ENCODE measurements at regions of chr10 and their contacts with region 1.

Region 1: DNA sequence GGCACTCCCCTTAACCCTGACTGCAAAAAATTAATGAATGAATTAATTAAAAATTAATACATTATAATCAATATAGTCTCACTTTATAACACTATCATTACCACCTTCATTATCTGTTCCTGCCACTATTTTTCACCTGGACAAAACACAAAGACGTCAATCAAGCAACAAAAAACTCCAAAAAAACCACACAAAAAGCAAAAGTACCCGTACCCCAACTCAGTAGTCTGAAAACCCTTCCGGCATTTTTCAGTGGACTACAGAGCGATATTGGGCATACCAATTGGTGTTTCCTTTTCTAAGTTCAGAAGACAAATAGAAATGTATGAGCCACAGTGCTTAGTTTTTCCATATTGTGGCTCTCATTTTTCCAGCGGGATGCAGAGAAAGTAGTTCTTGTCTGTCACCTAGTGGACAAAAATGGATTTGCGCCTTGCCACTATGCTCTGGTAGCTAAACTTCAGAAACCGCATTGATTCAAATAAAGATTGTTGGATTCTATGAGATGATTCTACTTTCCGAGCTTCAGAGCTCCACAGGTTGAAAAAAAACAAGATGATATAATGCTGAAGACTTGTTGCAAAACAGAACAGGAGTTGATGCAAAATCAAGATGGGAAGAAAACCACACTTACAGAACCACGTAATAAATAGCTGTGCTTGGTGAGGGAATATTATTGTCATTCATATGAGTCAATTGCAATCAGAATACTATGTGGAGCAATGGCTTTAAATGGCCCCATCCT is 50.6 kb upstream of the ITGB1 start:
- DNase-seq: peak; percentile 71
- ATAC-seq: no peak; the same call in 1 of the 2 replicates
- H3K4me3 ChIP-seq: no peak overlapping the region; a peak in 1 of 4 replicates
- H3K27ac ChIP-seq: no peak overlapping the region
- H3K4me1 ChIP-seq: peaks cover 44 to 63% of the 10 kb centered on the region in 2 experiments
- H3K27me3 ChIP-seq: no peaks in the 10 kb centered on the region
- CTCF ChIP-seq: peak; percentile 95 to 99 (median 96)
- POLR2A ChIP-seq: no peak
- RAD21 ChIP-seq: peak; percentile 99

Region 2: DNA sequence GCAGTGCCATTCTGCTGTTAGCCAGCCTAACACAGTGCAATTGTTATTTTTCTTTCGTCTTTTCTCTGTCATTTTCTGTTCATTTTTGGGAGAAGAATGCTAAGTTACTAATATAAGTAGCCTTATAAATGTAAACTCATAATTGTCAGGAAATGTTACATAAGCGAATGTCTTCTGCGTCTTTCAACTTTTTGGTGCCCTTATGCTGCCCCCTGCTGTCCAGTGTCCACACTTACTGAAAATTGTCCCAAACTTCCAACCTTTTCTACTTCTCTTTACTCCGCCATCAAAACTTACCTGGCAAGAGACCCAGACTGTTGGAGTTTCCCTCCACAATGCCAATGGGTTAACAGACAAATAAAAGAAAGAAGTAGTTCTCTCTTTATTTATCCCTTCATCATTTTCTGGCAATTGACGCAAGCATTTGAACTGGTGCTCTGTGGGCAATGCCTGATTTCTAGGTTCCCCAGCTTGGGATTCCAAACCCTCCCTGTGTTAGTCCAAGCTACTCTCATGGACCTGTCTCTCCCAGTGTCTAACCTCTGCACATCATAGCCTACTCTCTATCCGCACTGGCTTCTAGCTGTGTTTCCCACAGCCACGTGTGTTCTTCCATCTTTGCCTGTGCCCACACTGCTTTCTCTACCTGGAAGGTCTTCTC is 640.7 kb before region 1 on chr10:
- CTCF ChIA-PET with region 1: no interaction called
- POLR2A ChIA-PET with region 1: no interaction called
- RAD21 ChIA-PET with region 1: no interaction called
- intact Hi-C with region 1: loop called (anchors 5 kb)
- DNase-seq: peak; percentile 48
- ATAC-seq: peak; percentile 66
- H3K4me3 ChIP-seq: no peak overlapping the region
- H3K27ac ChIP-seq: no peak overlapping the region
- H3K4me1 ChIP-seq: no peaks in the 10 kb centered on the region
- H3K27me3 ChIP-seq: no peaks in the 10 kb centered on the region
- CTCF ChIP-seq: peak; percentile 48 to 81 (median 69); a peak in 5 of 6 replicates
- POLR2A ChIP-seq: no peak
- RAD21 ChIP-seq: peak; percentile 70

Region 3: GRCh38 chr10:32548208-32548607 is 460.5 kb before region 1 on chr10:
- CTCF ChIA-PET with region 1: no interaction called
- POLR2A ChIA-PET with region 1: no interaction called
- RAD21 ChIA-PET with region 1: no interaction called
- intact Hi-C with region 1: no loop called
- DNase-seq: no peak
- ATAC-seq: no peak
- H3K4me3 ChIP-seq: no peak overlapping the region
- H3K27ac ChIP-seq: no peak overlapping the region
- H3K4me1 ChIP-seq: no peaks in the 10 kb centered on the region
- H3K27me3 ChIP-seq: no peaks in the 10 kb centered on the region
- CTCF ChIP-seq: no peak
- POLR2A ChIP-seq: no peak
- RAD21 ChIP-seq: no peak

Region 4: GRCh38 chr10:32713560-32713959 is 295.1 kb before region 1 on chr10:
- CTCF ChIA-PET with region 1: no interaction called
- POLR2A ChIA-PET with region 1: no interaction called
- RAD21 ChIA-PET with region 1: no interaction called
- intact Hi-C with region 1: loop called (anchors 5 kb)
- DNase-seq: no peak
- ATAC-seq: peak; percentile 69
- H3K4me3 ChIP-seq: no peak overlapping the region
- H3K27ac ChIP-seq: no peak overlapping the region
- H3K4me1 ChIP-seq: no peaks in the 10 kb centered on the region
- H3K27me3 ChIP-seq: no peaks in the 10 kb centered on the region
- CTCF ChIP-seq: peak; percentile 25 to 50 (median 44); a peak in 5 of 6 replicates
- POLR2A ChIP-seq: no peak
- RAD21 ChIP-seq: peak; percentile 52

Region 5: DNA sequence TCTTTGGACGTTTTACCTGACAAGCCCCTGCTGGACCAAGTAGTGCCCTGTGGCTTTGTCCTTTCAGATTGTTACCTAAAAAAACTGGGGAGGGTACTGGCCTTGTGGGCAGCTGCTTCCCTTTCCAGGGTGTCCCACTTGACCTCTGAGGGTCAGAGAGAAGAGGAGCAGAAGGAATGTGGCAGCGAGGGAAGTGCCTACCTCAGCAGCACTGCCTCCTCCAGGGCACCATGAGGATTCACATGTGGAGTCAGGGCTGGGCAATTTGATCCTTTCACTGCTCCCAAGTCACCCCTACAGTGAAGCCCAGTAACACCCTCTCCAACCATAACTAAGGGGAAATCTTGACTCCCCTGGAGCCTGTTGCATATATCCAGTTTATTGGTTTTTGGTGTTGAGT is 115.2 kb before region 1 on chr10:
- CTCF ChIA-PET with region 1: no interaction called
- POLR2A ChIA-PET with region 1: no interaction called
- RAD21 ChIA-PET with region 1: no interaction called
- intact Hi-C with region 1: loop called (anchors 5 kb)
- DNase-seq: no peak
- ATAC-seq: peak; percentile 89
- H3K4me3 ChIP-seq: no peak overlapping the region
- H3K27ac ChIP-seq: no peak overlapping the region
- H3K4me1 ChIP-seq: no peaks in the 10 kb centered on the region
- H3K27me3 ChIP-seq: no peaks in the 10 kb centered on the region
- CTCF ChIP-seq: peak in 2 of 3 experiments; percentile 34 to 55; a peak in 4 of 6 replicates
- POLR2A ChIP-seq: no peak
- RAD21 ChIP-seq: no peak

Region 6: GRCh38 chr10:32980558-32981468 is 27.9 kb before region 1 on chr10:
- CTCF ChIA-PET with region 1: interaction called, 8 read pairs
- POLR2A ChIA-PET with region 1: interaction called, 7 read pairs
- RAD21 ChIA-PET with region 1: interaction called in 1 of 2 experiments, 4 read pairs
- intact Hi-C with region 1: loop called (anchors 1 kb)
- DNase-seq: peak; percentile 96
- ATAC-seq: peak; percentile 86
- H3K4me3 ChIP-seq: peak overlapping the region; percentile 49 to 55
- H3K27ac ChIP-seq: peak overlapping the region; percentile 71
- H3K4me1 ChIP-seq: peaks cover 55 to 68% of the 10 kb centered on the region in 2 experiments
- H3K27me3 ChIP-seq: no peaks in the 10 kb centered on the region
- CTCF ChIP-seq: peak in 1 of 3 experiments; percentile 35; a peak in 2 of 6 replicates
- POLR2A ChIP-seq: no peak
- RAD21 ChIP-seq: peak; percentile 31; the same call in 1 of the 2 replicates

Region 7: DNA sequence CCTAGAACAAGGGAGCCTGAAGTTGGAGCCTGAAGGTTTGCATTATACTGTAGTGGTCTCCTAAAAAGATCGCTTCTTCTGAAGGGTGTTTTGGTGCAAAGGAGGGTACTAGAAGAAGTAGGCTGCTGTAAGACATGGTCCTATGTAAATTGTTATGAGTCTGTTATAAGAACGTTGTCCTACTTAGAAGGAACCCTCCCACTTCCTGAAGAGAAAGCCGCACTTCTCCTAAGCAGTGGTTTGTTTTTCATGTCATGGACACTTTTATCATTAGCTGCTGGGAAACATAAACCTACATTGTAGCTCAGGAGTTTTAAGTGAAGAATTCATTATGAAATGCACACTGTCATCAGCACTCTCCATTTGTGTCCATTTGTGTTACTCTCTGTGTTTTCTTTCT is 78.5 kb after region 1 on chr10:
- CTCF ChIA-PET with region 1: no interaction called
- POLR2A ChIA-PET with region 1: no interaction called
- RAD21 ChIA-PET with region 1: no interaction called
- intact Hi-C with region 1: no loop called
- DNase-seq: no peak
- ATAC-seq: no peak
- H3K4me3 ChIP-seq: no peak overlapping the region
- H3K27ac ChIP-seq: no peak overlapping the region
- H3K4me1 ChIP-seq: no peaks in the 10 kb centered on the region
- H3K27me3 ChIP-seq: no peaks in the 10 kb centered on the region
- CTCF ChIP-seq: no peak
- POLR2A ChIP-seq: no peak
- RAD21 ChIP-seq: no peak

Region 8: DNA sequence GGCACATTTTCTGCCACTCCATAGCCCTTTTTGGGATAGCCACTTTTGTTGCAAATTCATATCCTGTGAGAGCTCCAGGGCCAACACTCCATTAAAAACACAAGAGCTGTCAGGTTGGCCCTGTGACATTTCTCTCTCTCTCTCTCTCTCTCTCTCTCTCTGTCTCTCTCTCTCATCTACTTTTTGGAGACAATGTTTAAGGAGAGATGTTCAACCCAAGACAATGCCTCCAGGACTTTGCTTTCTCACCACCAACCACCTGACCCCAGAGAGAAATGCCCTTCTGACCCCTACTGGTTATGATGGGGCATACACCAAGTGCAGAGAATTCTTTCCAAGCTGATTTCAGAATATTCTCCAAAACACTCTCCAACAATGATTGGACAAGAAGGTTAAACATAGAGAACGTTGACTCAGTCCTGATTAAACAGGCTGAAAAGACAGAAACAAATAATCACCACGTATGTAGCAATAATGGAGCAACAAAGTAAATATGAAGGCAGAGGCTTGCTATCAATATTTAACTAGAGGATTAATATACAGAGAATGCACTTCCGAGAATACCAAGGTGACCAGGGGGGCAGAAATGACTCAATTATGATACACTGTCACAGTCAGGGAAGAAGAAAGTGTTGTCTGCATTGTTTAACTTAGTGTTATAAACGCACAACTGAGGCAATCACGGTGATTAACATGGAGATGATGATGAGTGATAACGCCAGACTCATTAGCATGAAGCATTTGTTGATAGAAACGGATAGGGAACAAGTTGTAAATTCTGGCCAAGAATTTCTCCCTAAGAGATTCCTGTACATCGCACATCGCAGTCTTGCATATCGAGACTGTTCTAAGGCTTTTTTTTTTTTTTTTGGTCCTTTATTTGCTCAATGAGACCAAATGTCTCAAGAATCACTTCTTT is 147.3 kb after region 1 on chr10:
- CTCF ChIA-PET with region 1: interaction called, 15 read pairs
- POLR2A ChIA-PET with region 1: no interaction called
- RAD21 ChIA-PET with region 1: interaction called, 3 to 5 read pairs
- intact Hi-C with region 1: loop called (anchors 1 kb)
- DNase-seq: no peak
- ATAC-seq: peak; percentile 97
- H3K4me3 ChIP-seq: peak overlapping the region in 1 of 2 experiments; percentile 19; a peak in 1 of 4 replicates
- H3K27ac ChIP-seq: no peak overlapping the region
- H3K4me1 ChIP-seq: peaks cover 7 to 24% of the 10 kb centered on the region in 2 experiments; a peak in 3 of 4 replicates
- H3K27me3 ChIP-seq: no peaks in the 10 kb centered on the region
- CTCF ChIP-seq: peak; percentile 74 to 77 (median 76); a peak in 5 of 6 replicates
- POLR2A ChIP-seq: no peak
- RAD21 ChIP-seq: peak; percentile 91